OCI-LY7 (cell line): ENCODE measurements at regions of chr9 and their contacts with region 1.

Region 1: GRCh38 chr9:127503947-127504782 is 52.9 kb downstream of the LRSAM1 start:
- DNase-seq: peak; percentile 78
- H3K4me3 ChIP-seq: no peak overlapping the region
- H3K27ac ChIP-seq: no peak overlapping the region
- H3K4me1 ChIP-seq: no peaks in the 10 kb centered on the region
- CTCF ChIP-seq: peak; percentile 85

Region 2: GRCh38 chr9:127586537-127586936 is 82.4 kb after region 1 on chr9:
- CTCF ChIA-PET with region 1: no interaction called
- POLR2A ChIA-PET with region 1: no interaction called
- intact Hi-C with region 1: loop called (anchors 1 kb)
- DNase-seq: peak; percentile 71
- H3K4me3 ChIP-seq: no peak overlapping the region
- H3K27ac ChIP-seq: no peak overlapping the region
- H3K4me1 ChIP-seq: no peaks in the 10 kb centered on the region
- CTCF ChIP-seq: peak; percentile 80

Region 3: GRCh38 chr9:127734747-127735529 is 230.8 kb after region 1 on chr9 and contains the start of gene TOR2A:
- CTCF ChIA-PET with region 1: interaction called, 3 read pairs
- POLR2A ChIA-PET with region 1: no interaction called
- intact Hi-C with region 1: loop called (anchors 1 kb)
- DNase-seq: peak; percentile 97
- H3K4me3 ChIP-seq: peak within 1 kb of the TSS; percentile 75
- H3K27ac ChIP-seq: peak within 1 kb of the TSS; percentile 69
- H3K4me1 ChIP-seq: peaks cover 19% of the 10 kb centered on the region
- CTCF ChIP-seq: peak; percentile 93
- total RNA-seq, gene TOR2A: 8.9 and 13.9 TPM in 2 replicates